ENCODE measurements at regions of chr3 and their contacts with region 1.

Region 1: DNA sequence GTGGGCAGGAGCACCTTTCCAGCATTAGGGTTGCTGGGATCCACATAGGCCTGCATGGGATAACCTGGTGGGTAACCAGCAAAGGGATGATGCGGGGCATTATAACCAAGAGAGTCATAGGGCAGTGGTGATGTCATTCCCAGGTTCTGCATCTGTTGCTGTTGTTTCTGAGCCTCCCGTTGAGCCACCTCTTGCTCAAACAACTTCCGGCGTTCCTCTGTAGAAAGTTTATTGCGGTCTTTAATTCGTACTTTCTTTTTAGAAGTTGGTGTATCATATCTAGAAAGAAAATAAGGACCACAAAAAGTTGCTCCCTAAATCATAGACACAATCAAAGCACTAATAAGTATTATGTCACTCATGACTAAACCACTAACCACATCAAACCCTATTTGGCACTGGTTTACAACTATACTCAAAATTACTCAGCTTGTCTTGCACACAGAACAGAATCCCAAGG is 77.8 kb downstream of the NBEAL2 start:
- DNase-seq: peak; percentile 57
- H3K4me3 Mint-ChIP-seq: no peak overlapping the region
- H3K27ac Mint-ChIP-seq: peak overlapping the region; percentile 20
- H3K4me1 Mint-ChIP-seq: peaks cover 34% of the 10 kb centered on the region
- H3K27me3 Mint-ChIP-seq: no peaks in the 10 kb centered on the region

Region 2: GRCh38 chr3:47035634-47036033 is 21.6 kb before region 1 on chr3:
- CTCF ChIA-PET with region 1: interaction called, 4 read pairs
- POLR2A ChIA-PET with region 1: interaction called, 11 read pairs
- DNase-seq: no peak
- H3K4me3 Mint-ChIP-seq: no peak overlapping the region
- H3K27ac Mint-ChIP-seq: no peak overlapping the region
- H3K4me1 Mint-ChIP-seq: peaks cover 30% of the 10 kb centered on the region
- H3K27me3 Mint-ChIP-seq: no peaks in the 10 kb centered on the region

Region 3: GRCh38 chr3:47225310-47225906 is 168.2 kb after region 1 on chr3:
- CTCF ChIA-PET with region 1: no interaction called
- POLR2A ChIA-PET with region 1: no interaction called
- DNase-seq: no peak
- H3K4me3 Mint-ChIP-seq: no peak overlapping the region
- H3K27ac Mint-ChIP-seq: no peak overlapping the region
- H3K4me1 Mint-ChIP-seq: peaks cover 7% of the 10 kb centered on the region
- H3K27me3 Mint-ChIP-seq: no peaks in the 10 kb centered on the region

Region 4: GRCh38 chr3:47250309-47251060 is 193.2 kb after region 1 on chr3:
- CTCF ChIA-PET with region 1: no interaction called
- POLR2A ChIA-PET with region 1: no interaction called
- DNase-seq: no peak
- H3K4me3 Mint-ChIP-seq: no peak overlapping the region
- H3K27ac Mint-ChIP-seq: no peak overlapping the region
- H3K4me1 Mint-ChIP-seq: no peaks in the 10 kb centered on the region
- H3K27me3 Mint-ChIP-seq: no peaks in the 10 kb centered on the region

Measured in activated CD4-positive, alpha-beta memory T cell treated with anti-CD3 and anti-CD28 coated beads, Interleukin-2, amount 10 ng/mL, durations not matched to agents 7 days and 5 days (primary cell).